ENCODE measurements at regions of chr22 and their contacts with region 1.

Region 1: GRCh38 chr22:31661851-31662656 is at the start of gene PISD:
- DNase-seq: peak; percentile 98
- ATAC-seq: peak; percentile 85
- H3K4me3 ChIP-seq: peak within 1 kb of the TSS; percentile 75
- H3K27ac ChIP-seq: peak within 1 kb of the TSS; percentile 85
- H3K4me1 ChIP-seq: peaks cover 15% of the 10 kb centered on the region
- H3K27me3 ChIP-seq: no peaks in the 10 kb centered on the region
- CTCF ChIP-seq: no peak
- total RNA-seq, gene PISD: 36.0 and 50.5 TPM in 2 replicates

Region 2: GRCh38 chr22:31489604-31490495 is 172.2 kb before region 1 on chr22 and contains the start of gene EIF4ENIF1:
- CTCF ChIA-PET with region 1: no interaction called
- POLR2A ChIA-PET with region 1: no interaction called
- intact Hi-C with region 1: no loop called
- DNase-seq: peak; percentile 69
- ATAC-seq: peak; percentile 73
- H3K4me3 ChIP-seq: peak within 1 kb of the TSS; percentile 99
- H3K27ac ChIP-seq: peak within 1 kb of the TSS; percentile 67
- H3K4me1 ChIP-seq: peaks cover 14% of the 10 kb centered on the region; the same call in 1 of the 2 replicates
- H3K27me3 ChIP-seq: no peaks in the 10 kb centered on the region
- CTCF ChIP-seq: no peak
- total RNA-seq, gene EIF4ENIF1: 4.5 and 5.3 TPM in 2 replicates

Region 3: DNA sequence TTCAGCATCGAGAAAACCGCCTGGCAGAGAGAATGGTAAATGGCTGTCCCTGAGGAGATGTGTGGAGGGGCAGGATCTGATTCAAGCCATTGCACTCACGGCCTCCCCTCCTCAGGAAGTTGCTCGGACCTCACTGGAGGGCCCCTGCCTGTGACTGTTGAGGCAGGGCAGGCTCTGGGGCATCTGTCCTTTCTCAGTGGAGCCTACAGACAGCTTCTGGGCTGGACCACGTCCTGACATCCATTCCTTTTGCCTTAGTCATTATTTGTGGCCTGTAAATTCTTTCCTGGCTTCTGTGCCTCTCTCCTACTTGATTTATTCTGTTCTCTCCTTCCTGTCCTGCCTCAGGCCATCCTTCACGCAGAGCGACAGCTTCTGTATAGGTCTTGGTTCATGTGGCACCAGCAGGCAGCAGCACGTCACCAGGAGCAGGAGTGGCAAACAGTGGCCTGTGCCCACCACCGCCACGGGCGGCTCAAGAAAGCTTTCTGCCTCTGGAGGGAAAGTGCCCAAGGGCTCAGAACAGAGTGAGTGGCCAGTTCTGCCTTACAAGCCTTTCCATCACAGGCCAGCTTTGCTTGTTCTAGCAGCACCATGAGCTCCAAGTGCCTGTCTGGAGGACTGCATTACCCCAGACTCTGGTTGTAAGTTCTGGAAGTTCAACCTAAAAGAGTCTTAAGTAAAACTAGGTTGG is 59.6 kb before region 1 on chr22:
- CTCF ChIA-PET with region 1: no interaction called
- POLR2A ChIA-PET with region 1: no interaction called
- intact Hi-C with region 1: no loop called
- DNase-seq: peak; percentile 86
- ATAC-seq: peak; percentile 95
- H3K4me3 ChIP-seq: no peak overlapping the region
- H3K27ac ChIP-seq: peak overlapping the region; percentile 45
- H3K4me1 ChIP-seq: peaks cover 14% of the 10 kb centered on the region
- H3K27me3 ChIP-seq: no peaks in the 10 kb centered on the region
- CTCF ChIP-seq: no peak

Region 4: DNA sequence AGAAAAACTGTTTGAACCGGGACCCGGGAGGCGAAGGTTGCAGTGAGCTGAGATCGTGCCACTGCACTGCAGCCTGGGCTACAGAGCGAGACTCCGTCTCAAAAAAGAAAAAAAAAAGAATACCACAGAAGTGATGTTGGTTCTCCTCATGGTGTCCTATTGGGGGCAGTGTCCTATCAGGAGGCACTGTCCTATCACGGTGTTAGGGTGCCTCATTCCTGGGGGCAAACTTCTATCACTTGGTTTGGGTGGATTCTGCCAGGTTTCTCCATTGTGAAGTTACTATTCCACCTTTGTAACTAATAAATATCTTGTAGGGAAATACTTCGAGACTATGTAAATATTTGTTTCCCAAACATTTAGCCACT is 68.3 kb after region 1 on chr22:
- CTCF ChIA-PET with region 1: no interaction called
- POLR2A ChIA-PET with region 1: no interaction called
- intact Hi-C with region 1: no loop called
- DNase-seq: no peak
- ATAC-seq: peak; percentile 13; the same call in 1 of the 2 replicates
- H3K4me3 ChIP-seq: no peak overlapping the region
- H3K27ac ChIP-seq: no peak overlapping the region
- H3K4me1 ChIP-seq: peaks cover 24% of the 10 kb centered on the region
- H3K27me3 ChIP-seq: no peaks in the 10 kb centered on the region
- CTCF ChIP-seq: peak; percentile 42

Region 5: DNA sequence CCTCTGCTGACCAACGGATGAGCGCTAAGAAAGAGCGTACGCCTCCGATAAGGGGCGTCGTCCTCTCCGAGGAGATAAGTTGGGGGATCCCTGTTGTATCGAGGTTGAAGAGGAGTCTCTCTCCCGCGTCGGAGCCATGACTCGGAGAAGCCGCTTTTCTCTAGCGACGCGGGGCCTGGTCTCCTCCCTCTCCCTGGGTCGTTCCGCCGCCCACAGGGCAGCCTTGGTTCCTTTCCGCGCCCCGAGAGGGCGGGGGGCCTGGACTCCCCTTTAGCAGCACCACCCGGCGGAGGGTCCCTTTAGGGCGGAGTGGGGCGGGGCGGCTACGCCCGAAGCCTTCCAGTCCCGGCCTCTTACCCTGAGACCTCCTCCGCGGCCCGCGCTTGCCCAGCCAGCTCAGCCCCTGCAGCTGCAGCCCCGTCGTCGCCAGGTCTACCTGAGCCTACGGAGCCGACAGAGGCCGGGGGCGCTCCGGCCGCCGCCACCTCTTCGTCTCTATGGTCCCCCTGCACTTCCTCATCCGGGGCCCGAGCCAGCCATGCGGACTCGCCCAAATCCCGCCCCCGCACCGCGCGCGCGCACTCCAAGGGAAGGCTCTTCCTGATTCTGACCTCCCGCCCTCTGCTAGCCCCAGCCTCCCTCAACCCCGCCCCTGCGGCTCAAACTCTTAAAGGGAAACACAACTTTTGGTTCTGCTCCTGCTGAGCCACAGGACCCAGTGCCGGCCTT is 87.7 kb after region 1 on chr22 and contains the start of gene PRR14L:
- CTCF ChIA-PET with region 1: no interaction called
- POLR2A ChIA-PET with region 1: interaction called, 5 read pairs
- intact Hi-C with region 1: loop called (anchors 5 kb)
- DNase-seq: peak; percentile 90
- ATAC-seq: peak; percentile 63
- H3K4me3 ChIP-seq: peak within 1 kb of the TSS; percentile 100
- H3K27ac ChIP-seq: peak within 1 kb of the TSS; percentile 64
- H3K4me1 ChIP-seq: peaks cover 26% of the 10 kb centered on the region
- H3K27me3 ChIP-seq: no peaks in the 10 kb centered on the region
- CTCF ChIP-seq: no peak
- total RNA-seq, gene PRR14L: 9.3 and 17.9 TPM in 2 replicates

Region 6: GRCh38 chr22:31776231-31776630 is 114.2 kb after region 1 on chr22:
- CTCF ChIA-PET with region 1: no interaction called
- POLR2A ChIA-PET with region 1: no interaction called
- intact Hi-C with region 1: no loop called
- DNase-seq: peak; percentile 49
- ATAC-seq: peak; percentile 40
- H3K4me3 ChIP-seq: no peak overlapping the region
- H3K27ac ChIP-seq: no peak overlapping the region
- H3K4me1 ChIP-seq: peaks cover 4% of the 10 kb centered on the region; the same call in 1 of the 2 replicates
- H3K27me3 ChIP-seq: no peaks in the 10 kb centered on the region
- CTCF ChIP-seq: no peak

Region 7: DNA sequence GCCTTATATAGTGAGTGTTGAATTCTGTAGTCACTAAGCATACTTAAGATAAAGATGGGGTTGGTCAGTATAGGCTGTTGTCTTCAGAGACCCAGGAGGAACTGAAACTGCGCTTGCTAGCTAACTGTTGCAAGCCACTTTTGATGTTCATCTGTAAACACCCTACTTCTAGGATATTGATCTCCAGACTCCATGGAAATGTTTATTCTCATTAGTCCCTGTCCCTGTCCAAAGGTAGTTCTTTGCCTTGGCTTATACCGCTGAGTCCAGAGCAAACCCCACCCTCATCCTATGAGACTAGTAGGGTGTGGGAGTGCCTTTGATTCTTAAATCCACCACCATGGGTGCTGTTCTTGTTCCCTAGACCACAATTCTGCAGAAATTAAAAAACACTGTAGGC is 128.2 kb after region 1 on chr22:
- CTCF ChIA-PET with region 1: no interaction called
- POLR2A ChIA-PET with region 1: interaction called, 14 read pairs
- intact Hi-C with region 1: no loop called
- DNase-seq: no peak
- ATAC-seq: no peak
- H3K4me3 ChIP-seq: no peak overlapping the region
- H3K27ac ChIP-seq: no peak overlapping the region
- H3K4me1 ChIP-seq: no peaks in the 10 kb centered on the region
- H3K27me3 ChIP-seq: no peaks in the 10 kb centered on the region
- CTCF ChIP-seq: no peak

Region 8: DNA sequence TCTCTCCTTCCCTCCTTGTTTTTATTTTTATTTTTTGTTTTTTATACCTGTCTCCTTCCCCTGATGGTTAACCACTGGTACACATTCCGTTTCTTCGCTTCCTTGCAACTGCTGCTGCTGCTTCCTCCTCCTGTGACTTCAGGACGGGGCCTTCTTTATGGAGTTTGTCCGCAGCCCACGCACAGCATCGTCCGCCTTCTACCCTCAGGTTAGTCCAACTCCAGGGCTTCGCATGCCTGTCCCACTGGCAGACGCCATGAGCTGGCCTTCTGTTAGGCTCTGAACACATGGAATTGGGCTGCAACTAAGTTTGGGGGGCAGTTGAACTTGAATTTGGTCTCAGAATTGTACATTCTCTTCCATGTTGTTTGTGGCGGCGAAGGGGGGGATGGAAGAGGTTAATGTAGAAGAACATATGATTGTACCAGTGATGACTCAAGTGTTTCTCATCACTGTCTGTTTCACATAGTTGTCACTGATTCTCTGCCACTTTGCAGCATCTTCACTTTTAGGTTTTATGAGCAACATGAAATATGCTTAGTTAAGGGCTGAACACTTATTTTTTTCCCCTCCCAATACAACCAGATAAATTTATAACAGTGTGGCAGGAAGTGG is 199.3 kb after region 1 on chr22:
- CTCF ChIA-PET with region 1: no interaction called
- POLR2A ChIA-PET with region 1: no interaction called
- intact Hi-C with region 1: loop called (anchors 10 kb)
- DNase-seq: peak; percentile 22
- ATAC-seq: peak; percentile 43; the same call in 1 of the 2 replicates
- H3K4me3 ChIP-seq: no peak overlapping the region
- H3K27ac ChIP-seq: no peak overlapping the region
- H3K4me1 ChIP-seq: peaks cover 7% of the 10 kb centered on the region; the same call in 1 of the 2 replicates
- H3K27me3 ChIP-seq: no peaks in the 10 kb centered on the region
- CTCF ChIP-seq: no peak

Region 9: DNA sequence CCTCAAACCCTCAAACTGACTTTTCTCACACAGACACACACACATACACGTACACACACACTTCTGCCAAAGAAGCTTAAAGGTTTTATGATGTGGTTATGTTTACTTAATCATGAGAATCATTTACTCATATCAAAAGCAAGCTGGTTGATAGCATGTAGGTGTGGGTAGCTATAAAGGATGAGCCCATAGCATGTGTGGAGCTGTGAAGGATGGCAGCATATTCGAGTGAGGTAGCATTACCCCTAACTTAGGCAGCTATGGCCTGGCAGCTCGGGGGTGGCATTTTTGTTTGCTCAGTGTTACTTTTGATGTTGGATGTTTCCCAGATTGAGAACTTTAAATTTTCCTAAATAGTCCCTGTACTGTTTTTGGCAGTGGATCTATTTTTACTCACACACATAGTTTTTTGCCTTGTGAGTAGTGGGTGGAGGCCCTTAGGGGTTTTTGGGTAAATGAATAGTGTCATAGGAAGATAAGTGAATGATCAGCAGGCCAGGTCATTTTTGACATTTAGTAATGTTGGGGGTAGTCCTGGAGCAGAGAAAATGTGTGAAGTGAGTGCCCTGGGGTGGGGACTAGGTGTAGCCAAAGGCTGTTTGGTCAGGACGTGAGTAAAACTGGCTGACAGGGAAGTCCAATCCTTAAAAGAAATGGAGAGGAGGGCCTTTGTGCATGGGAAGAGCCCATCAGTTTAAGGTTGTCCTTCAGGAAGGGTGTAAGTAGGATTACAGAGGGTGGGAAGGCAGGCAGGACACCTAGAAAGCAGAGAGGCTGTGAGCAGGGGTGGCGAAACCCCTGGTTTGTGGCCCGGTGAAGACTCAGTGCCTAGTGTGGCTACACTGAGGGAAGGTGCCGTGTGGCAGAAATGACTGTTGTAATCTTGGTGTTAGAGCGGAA is 289.4 kb after region 1 on chr22:
- CTCF ChIA-PET with region 1: no interaction called
- POLR2A ChIA-PET with region 1: interaction called, 6 read pairs
- intact Hi-C with region 1: loop called (anchors 2 kb)
- DNase-seq: peak; percentile 25
- ATAC-seq: peak; percentile 42
- H3K4me3 ChIP-seq: no peak overlapping the region
- H3K27ac ChIP-seq: peak overlapping the region; percentile 67
- H3K4me1 ChIP-seq: peaks cover 37% of the 10 kb centered on the region
- H3K27me3 ChIP-seq: no peaks in the 10 kb centered on the region
- CTCF ChIP-seq: no peak

Region 10: DNA sequence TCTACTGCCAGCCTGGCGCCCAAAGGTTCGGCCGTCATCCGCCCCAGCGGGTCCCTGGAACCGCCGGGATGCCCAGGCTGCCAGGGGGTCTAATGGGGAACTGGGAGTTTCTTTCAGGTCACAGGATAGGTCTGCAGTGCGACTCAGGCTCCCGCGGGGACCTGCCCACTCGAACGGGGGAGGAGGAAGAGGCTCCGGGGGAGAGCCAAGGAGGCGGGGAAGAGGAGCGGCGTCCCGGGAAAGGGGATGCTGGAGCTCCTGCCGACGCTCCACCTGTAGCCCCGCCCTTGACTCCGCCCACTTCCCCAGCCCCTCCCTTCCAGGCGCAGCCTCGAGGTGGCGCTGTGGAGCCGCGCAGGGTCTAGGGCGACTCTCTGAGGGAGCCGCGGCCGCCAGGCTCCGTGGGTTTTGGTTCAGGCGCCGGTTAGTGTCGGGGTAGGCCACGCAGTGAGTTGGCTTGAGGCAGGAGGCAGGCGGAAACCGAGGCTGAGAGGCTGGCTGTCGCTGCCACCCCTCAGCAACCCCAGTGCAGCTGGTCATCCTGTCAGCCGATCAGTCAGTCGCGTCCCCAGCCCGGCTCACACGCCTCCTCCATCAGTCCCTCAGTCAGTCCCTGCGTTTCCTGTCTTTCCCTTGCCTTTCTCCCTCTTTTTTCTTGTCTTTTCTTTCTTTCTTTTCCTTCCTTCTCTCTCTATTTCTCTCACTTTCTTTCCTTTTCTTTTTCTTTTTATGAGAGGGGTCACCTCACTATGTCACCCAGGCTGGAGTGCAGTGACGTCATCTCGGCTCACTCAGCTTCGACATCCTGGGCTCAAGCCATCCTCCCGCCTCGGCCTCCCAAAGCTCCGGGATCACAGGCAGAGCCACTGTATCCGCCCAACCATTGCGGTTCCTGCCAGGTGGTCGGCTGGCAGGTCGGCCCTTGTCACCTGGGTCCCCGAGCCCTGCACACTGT is 308.7 kb after region 1 on chr22:
- CTCF ChIA-PET with region 1: interaction called, 5 read pairs
- POLR2A ChIA-PET with region 1: no interaction called
- intact Hi-C with region 1: loop called (anchors 1 kb)
- DNase-seq: peak; percentile 86
- ATAC-seq: peak; percentile 82
- H3K4me3 ChIP-seq: peak overlapping the region; percentile 69
- H3K27ac ChIP-seq: no peak overlapping the region
- H3K4me1 ChIP-seq: peaks cover 8% of the 10 kb centered on the region; the same call in 1 of the 2 replicates
- H3K27me3 ChIP-seq: no peaks in the 10 kb centered on the region
- CTCF ChIP-seq: peak; percentile 65

Region 11: GRCh38 chr22:32080904-32081303 is 418.9 kb after region 1 on chr22:
- CTCF ChIA-PET with region 1: no interaction called
- POLR2A ChIA-PET with region 1: no interaction called
- intact Hi-C with region 1: loop called (anchors 10 kb)
- DNase-seq: peak; percentile 60
- ATAC-seq: peak; percentile 69
- H3K4me3 ChIP-seq: no peak overlapping the region
- H3K27ac ChIP-seq: no peak overlapping the region
- H3K4me1 ChIP-seq: no peaks in the 10 kb centered on the region
- H3K27me3 ChIP-seq: peaks cover 5% of the 10 kb centered on the region
- CTCF ChIP-seq: peak; percentile 75